ENCODE measurements at regions of chr10 and their contacts with region 1.

Region 1: DNA sequence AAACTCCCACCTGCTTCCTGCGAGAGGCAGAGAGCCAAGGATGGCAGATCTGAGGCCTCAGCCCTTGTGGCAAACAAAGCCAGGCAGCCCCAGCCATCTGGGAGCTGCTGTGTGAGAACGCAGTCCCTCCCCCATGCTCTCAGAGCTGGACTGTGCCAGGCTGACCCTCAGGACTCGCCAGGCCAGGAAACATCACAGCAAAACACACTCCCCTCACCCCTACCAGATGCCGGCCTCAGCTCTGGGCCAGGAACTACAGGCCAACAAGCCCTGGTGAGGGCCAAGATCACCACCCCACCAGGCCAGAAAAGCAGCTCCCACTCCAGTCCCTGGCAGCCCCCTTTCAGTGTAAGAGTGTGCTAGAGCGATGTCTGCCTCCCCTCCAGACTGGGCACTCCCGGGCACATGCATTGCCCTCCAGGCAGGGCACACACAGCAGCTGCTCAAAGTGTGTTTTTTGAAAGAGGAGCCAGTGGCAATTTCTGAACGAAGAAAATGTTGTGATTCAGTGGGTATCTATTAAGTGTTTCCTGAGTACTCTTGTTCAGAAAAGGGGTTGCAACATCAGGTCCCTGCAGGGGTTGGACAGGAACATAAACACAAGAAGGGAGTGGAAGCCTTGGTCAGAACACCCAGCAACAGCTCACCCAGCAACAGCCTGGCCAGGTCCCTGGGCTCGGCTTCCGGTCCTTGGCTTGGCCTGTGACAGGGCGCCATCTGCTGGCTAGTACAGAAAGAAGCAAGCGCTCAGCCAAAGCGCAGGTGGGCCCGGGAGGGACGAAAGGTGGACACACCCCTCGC is 18.3 kb downstream of the LRRC20 start:
- DNase-seq: peak; percentile 95
- H3K4me3 ChIP-seq: no peak overlapping the region
- CTCF ChIP-seq: peak; percentile 95

Region 2: DNA sequence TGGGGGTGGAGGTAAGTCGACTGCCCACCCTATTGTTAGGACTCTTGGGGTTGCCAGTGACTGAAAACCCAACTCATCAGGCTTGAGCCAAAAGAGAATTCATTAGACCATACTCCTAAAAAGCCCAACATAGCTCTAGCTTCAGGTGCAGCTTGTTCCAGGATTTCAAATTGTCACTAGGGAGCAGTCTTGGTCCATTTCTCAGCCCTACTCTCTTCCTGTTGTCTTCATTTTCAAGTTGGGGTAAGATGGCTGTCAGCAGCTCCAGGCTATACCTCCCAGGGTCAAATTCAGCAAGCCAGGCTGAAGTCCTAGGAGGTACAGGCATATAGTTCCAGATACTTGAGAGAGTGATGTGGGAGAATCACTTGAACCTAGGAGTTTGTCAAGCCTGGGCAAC is 577.4 kb before region 1 on chr10:
- CTCF ChIA-PET with region 1: interaction called, 10 read pairs
- POLR2A ChIA-PET with region 1: no interaction called
- DNase-seq: no peak
- H3K4me3 ChIP-seq: no peak overlapping the region
- CTCF ChIP-seq: peak; percentile 48

Region 3: DNA sequence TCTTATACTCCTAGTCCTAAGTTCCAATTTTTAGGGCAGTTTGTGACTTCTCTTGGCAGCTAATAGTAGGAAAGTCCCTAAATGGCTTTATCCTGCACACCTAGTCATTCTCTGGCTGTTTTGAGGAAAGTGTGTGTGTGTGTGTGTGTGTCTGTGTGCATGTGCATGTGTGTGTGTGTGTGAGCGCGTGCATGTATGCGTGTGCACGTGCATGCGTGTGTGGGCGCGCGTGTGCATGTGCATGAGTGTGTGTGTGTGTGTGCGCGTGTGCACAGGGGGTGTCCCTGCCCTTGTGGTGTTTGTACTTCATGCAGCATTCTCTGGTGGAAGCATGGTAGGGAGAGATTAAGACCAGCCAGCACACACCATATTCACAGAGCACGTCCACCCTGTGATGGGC is 293.3 kb before region 1 on chr10:
- CTCF ChIA-PET with region 1: no interaction called
- POLR2A ChIA-PET with region 1: no interaction called
- DNase-seq: no peak
- H3K4me3 ChIP-seq: no peak overlapping the region
- CTCF ChIP-seq: no peak

Region 4: GRCh38 chr10:70162151-70162891 is 201.8 kb before region 1 on chr10:
- CTCF ChIA-PET with region 1: interaction called, 14 read pairs
- POLR2A ChIA-PET with region 1: no interaction called
- DNase-seq: no peak
- H3K4me3 ChIP-seq: no peak overlapping the region
- CTCF ChIP-seq: no peak

Region 5: GRCh38 chr10:70186571-70186970 is 177.6 kb before region 1 on chr10:
- CTCF ChIA-PET with region 1: no interaction called
- POLR2A ChIA-PET with region 1: no interaction called
- DNase-seq: no peak
- H3K4me3 ChIP-seq: no peak overlapping the region
- CTCF ChIP-seq: no peak

Region 6: GRCh38 chr10:70227548-70228320 is 136.4 kb before region 1 on chr10:
- CTCF ChIA-PET with region 1: interaction called, 533 read pairs
- POLR2A ChIA-PET with region 1: interaction called, 4 read pairs
- DNase-seq: no peak
- H3K4me3 ChIP-seq: no peak overlapping the region
- CTCF ChIP-seq: no peak

Region 7: DNA sequence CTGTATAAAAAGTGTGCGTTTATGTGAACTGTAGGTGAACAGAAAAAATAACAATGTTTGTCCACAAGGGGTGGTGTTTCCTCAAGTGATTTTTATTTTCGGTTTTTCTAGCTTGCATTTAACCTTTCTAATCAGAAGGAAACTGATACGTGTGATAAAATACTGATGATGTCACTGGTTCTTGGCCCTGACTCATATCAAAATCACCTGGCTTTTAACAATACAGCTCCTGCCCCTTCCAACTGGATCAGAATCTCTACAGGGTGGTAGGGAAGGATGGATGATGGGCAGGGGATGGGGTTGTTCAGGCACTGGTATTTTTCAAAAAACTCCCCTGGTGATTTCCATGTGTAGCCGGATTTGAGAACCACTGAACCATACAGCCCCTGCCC is 91.2 kb before region 1 on chr10:
- CTCF ChIA-PET with region 1: interaction called, 13 read pairs
- POLR2A ChIA-PET with region 1: no interaction called
- DNase-seq: no peak
- H3K4me3 ChIP-seq: no peak overlapping the region
- CTCF ChIP-seq: peak; percentile 23

Region 8: DNA sequence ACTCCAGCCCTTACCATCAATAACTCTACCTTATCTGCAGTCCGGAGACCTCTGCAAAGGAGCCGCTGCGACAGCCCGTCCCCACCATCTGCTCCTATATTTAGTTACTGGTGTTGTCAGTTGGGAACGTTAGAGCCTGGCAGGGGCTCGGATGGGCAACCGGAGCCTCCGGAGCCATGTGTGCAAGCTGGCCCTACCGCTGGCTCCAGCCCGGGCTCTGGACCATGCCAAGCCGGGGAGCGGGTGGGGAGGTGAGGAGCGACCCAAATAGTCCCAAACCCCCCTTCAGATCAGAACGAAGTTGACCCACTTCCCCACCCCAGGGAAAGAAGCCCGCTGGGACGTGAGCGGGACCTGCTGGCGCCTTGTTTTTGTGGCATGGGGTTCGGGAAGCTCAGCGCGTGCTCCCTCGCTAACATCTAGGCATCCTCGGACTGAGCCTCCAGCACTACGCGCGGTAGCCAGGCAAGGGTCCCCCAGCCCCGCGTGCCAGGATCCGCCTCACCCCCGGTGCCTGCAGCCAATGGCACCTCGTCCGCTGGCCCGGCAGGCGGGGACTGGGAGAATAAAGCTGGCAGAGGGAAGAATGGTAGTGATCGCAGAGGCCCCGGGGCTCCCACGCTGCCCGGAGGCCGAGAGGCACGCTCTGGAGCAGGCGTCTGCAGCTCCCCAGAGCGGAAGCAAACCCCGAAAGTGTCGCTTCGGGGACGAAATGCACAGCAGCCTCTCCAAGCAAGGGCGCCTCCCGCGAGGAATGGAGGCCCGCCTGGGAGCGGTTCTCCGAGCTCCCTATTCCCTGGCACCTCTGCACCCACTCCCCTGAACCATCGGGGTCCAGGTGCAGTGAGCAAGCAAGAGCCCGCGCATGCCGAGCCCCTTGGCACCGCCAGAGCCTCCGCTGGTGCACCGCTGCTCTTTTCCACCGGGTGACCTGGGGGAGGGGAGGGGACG is 17.6 kb after region 1 on chr10:
- CTCF ChIA-PET with region 1: interaction called, 103 read pairs
- POLR2A ChIA-PET with region 1: no interaction called
- DNase-seq: no peak
- H3K4me3 ChIP-seq: peak overlapping the region; percentile 79
- CTCF ChIP-seq: no peak

Measured in AG04449 (cell line).